Astrocyte of the cerebellum (primary cell): ENCODE measurements at regions of chr2 and their contacts with region 1.

Region 1: DNA sequence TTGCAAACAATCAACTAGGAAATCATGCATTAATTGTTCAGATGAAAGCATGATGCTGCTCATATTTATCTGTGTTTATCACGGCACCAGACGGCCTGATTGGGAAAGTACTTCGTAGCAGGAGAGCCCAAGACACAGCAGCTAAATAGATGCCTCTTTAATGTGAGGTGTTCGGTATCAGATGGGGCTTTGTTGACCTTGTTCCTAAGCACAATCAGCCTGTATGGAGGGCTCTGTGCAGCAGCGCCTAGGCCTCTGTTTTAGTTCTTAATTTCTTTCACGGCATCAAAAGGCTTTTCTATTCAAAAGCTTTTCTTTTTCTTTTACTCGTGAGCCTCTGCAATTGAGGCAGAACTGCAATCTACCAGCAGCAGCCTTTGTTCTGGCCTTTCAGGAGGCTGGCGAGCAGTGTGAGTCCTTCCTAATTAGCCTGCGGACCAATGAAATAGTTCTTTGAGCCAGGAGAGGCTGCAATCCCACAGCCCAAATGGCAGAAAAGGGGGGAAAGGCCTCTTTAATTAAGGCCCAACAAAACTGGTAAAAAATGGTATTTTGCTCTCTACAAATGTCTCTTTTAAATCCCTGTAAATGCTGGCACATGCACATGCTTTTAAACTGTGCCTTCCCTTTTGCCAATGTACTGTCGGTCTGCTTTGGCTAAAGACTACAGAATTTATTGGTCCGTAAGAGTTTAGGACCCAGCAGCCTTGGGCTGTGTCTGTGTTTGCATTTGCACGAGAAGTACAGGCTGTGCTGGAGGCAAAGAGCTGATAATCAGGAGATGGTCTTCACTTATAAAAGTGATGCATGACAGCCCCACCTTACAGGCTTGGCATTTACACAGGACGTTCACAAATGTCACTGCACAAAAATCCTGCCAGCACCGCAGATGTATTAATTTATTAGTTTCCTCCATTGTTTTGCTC is 159.6 kb downstream of the RND3 start:
- DNase-seq: no peak
- H3K4me3 ChIP-seq: no peak overlapping the region
- CTCF ChIP-seq: no peak

Region 2: GRCh38 chr2:150222379-150222778 is 105.4 kb before region 1 on chr2:
- in situ Hi-C with region 1: loop called (anchors 5 kb)
- DNase-seq: no peak
- H3K4me3 ChIP-seq: no peak overlapping the region
- CTCF ChIP-seq: no peak

Region 3: DNA sequence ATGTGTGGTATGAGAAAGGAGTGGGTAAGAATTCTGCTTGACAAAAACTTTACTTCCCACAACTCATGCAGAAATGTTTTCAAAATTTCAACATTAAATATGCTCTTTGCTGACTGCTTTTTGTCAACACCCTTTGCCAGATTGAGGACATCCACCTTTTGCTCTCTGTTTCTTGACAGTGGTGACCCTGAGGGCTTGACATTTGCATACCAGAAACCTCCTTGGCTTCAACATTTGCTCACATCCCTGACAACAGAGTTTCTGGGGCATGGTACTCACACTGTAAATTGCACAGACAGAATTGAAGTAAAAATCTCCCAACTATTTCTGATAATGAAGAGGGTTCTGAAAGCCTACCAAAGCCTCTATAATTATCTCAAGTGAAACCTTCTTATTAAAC is 64.0 kb after region 1 on chr2:
- in situ Hi-C with region 1: no loop called
- DNase-seq: no peak
- H3K4me3 ChIP-seq: no peak overlapping the region
- CTCF ChIP-seq: no peak